Tibial artery (tissue), 4 donors: ENCODE measurements at regions of chr3 and their contacts with region 1.

Region 1: GRCh38 chr3:100068826-100069225 is 45.5 kb downstream of the FILIP1L start:
- DNase-seq: peak; percentile 86 to 91
- H3K4me3 ChIP-seq: no peak overlapping the region
- H3K27ac ChIP-seq: peak overlapping the region; percentile 64 to 79
- H3K4me1 ChIP-seq: peaks cover 0 to 61% (median 16%) of the 10 kb centered on the region in 4 donors
- H3K27me3 ChIP-seq: no peaks in the 10 kb centered on the region
- CTCF ChIP-seq: peak; percentile 73 to 82

Region 2: GRCh38 chr3:98291332-98291957 is 1777.4 kb before region 1 on chr3:
- intact Hi-C with region 1: no loop called
- DNase-seq: no peak
- H3K4me3 ChIP-seq: no peak overlapping the region
- H3K27ac ChIP-seq: no peak overlapping the region
- H3K4me1 ChIP-seq: no peaks in the 10 kb centered on the region
- H3K27me3 ChIP-seq: no peaks in the 10 kb centered on the region
- CTCF ChIP-seq: no peak

Region 3: DNA sequence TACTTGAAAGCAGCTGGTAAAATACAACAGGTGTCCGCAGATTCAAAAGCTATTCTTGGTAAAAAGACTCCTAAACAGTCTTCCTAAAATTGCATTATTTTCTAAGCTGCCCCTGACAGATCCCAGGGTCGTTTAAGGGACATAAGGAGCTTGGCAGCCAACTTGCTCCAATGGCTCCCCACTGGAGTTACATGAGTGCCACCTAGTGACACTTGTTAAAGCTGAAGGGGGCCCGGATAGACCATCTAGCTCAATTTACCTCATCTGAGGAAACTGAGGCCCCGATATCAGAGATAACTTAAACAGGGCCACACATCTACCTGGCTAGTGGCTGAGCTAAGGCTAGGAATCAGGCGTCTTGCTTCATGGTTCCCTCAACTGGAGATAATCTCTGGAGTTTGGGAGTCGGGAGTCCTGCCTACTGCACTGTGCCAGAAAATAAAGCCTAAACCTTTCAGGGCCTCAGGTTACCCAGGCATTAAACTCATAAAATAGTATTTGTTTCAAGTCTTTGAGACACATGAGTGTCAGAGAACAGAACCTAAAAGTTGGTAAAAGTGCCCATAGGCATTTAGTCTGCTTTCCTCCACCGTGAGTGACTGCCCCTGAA is 185.4 kb after region 1 on chr3:
- intact Hi-C with region 1: loop called (anchors 10 kb)
- DNase-seq: peak in 1 of 2 donors; percentile 45
- H3K4me3 ChIP-seq: no peak overlapping the region
- H3K27ac ChIP-seq: peak overlapping the region; percentile 50 to 60
- H3K4me1 ChIP-seq: peaks cover 0 to 16% (median 8%) of the 10 kb centered on the region in 4 donors
- H3K27me3 ChIP-seq: no peaks in the 10 kb centered on the region
- CTCF ChIP-seq: peak; percentile 79